Endothelial cell of umbilical vein (primary cell): ENCODE measurements at regions of chr11 and their contacts with region 1.

Region 1: DNA sequence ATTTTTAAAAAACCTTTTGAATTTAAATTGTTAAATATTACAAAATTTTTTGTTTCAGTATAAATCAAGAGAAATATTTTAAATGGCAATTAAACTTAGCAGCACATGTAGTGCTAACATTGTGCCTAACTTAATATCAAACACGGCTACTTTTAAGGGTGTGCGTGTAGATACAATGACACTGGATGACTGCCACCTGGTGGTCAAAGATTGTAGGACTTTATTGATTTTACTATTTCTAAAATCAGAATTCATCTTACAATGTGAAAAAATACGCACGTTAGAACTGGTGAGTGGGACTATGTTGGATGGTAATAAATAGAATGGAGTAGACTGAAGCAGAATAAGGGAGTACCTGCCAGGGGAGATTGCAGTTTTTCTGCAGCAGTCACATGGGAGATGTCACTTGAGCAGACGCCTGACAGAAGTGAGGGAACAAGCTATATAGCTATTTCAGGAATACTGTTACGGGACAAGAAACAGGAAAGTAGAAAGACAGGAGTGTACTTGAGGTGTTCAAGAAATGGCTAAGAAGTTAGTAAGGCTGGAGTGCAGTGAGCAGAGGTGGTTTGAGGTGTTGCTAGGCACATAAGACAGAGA is 52.9 kb downstream of the UVRAG start:
- DNase-seq: peak; percentile 71
- H3K4me3 ChIP-seq: no peak overlapping the region
- H3K27ac ChIP-seq: no peak overlapping the region
- H3K4me1 ChIP-seq: peaks cover 20% of the 10 kb centered on the region
- H3K27me3 ChIP-seq: no peaks in the 10 kb centered on the region
- CTCF ChIP-seq: peak; percentile 47 to 58
- POLR2A ChIP-seq: no peak

Region 2: DNA sequence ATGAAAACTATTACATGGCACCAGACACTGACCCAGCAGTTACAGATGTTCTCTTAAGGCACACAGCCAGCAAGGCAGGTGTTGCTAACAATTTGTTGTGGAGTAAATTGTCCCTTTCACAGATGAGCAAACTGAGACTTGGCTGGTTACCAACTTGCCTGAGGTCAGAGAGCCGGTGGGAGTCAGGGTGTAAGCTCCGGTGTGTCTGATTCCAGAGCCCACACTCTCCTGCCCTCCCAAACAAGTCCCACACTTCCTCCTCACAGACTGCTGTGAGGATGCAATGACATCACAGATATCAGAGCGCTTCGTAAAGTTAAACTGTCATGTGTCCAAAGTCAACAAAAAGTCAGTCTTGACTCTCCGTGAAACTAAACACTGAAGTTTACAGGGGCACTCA is 354.6 kb before region 1 on chr11:
- CTCF ChIA-PET with region 1: no interaction called
- POLR2A ChIA-PET with region 1: no interaction called
- dilution Hi-C with region 1: no loop called
- intact Hi-C with region 1: no loop called
- DNase-seq: peak; percentile 53
- H3K4me3 ChIP-seq: no peak overlapping the region
- H3K27ac ChIP-seq: no peak overlapping the region
- H3K4me1 ChIP-seq: no peaks in the 10 kb centered on the region
- H3K27me3 ChIP-seq: no peaks in the 10 kb centered on the region
- CTCF ChIP-seq: no peak
- POLR2A ChIP-seq: no peak

Region 3: GRCh38 chr11:75689863-75690609 is 177.8 kb before region 1 on chr11:
- CTCF ChIA-PET with region 1: no interaction called
- POLR2A ChIA-PET with region 1: no interaction called
- dilution Hi-C with region 1: no loop called
- intact Hi-C with region 1: no loop called
- DNase-seq: no peak
- H3K4me3 ChIP-seq: no peak overlapping the region
- H3K27ac ChIP-seq: no peak overlapping the region
- H3K4me1 ChIP-seq: no peaks in the 10 kb centered on the region
- H3K27me3 ChIP-seq: peaks cover 12 to 16% of the 10 kb centered on the region in 2 experiments
- CTCF ChIP-seq: no peak
- POLR2A ChIP-seq: no peak

Region 4: DNA sequence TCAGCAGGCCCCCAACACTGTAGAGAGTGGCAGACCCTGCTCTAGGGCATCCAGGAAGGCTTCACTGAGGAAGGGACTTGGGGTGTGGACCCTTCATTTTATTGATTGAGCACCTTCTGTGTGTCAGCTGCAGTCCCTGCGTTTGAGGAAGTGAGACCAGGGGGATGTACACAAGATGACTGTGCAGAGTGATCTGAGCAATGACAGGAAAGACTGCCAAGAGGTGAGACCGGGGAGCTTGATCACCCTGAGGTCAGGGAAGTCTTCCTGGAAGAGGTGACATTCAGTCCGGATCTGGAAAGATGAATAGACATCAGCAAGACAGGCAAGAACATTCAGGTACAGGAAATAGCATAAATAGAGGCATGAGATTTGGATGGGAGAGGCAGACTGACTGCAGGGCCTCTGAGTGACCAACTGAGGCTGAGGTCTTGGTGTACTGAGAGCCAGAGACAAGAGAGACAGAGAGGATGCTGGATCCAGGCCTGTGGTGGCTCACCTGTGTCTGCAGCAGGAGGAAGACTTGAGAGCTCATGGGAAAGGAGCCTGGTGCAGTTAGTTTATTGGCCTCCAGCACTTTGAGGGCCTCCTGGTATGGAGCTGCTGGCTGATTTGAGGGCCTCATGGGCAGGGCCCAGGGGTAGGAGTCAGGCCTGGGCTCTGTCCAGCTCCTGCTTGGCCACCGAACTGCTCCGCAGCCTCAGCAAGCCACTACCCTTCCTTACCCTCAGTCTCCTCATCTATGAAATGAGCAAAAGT is 94.1 kb before region 1 on chr11:
- CTCF ChIA-PET with region 1: no interaction called
- POLR2A ChIA-PET with region 1: no interaction called
- dilution Hi-C with region 1: no loop called
- intact Hi-C with region 1: no loop called
- DNase-seq: no peak
- H3K4me3 ChIP-seq: no peak overlapping the region
- H3K27ac ChIP-seq: no peak overlapping the region
- H3K4me1 ChIP-seq: peaks cover 15% of the 10 kb centered on the region
- H3K27me3 ChIP-seq: peaks cover 19 to 23% of the 10 kb centered on the region in 2 experiments
- CTCF ChIP-seq: no peak
- POLR2A ChIP-seq: no peak

Region 5: DNA sequence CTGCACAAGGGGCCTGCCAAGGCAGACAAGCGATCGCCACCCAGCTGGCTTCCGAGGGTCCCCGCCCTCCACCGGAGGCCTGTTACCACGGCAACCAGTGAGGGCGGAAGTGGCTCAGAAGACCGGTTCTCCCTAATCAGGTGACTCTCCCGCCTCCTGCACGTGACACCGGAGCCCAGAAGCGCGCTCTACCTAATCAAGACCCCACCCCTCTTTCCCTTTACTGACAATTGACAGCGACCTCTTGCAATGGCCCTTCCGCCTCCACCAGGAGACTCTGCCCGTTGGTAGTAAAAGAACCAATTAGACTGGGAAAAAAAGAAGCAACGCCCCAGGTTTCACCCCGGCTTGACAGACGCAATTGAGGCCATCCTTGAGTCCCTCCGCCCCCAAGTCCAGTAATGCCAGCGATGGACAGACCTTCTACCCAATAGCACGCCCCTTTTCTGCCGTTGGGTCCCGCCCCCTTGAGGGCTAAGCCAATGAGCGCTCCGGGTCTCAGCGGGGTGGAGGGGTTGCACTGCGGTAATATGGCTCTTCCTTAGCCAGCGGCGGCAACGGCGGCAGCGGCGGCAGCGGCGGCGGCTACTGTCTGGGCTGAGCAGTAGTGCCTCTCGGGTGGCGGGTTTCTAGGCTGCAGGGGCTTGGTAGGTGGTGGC is 53.1 kb before region 1 on chr11 and contains the start of gene UVRAG:
- CTCF ChIA-PET with region 1: interaction called, 55 read pairs
- POLR2A ChIA-PET with region 1: no interaction called
- dilution Hi-C with region 1: no loop called
- intact Hi-C with region 1: loop called (anchors 2 kb)
- DNase-seq: peak; percentile 100
- H3K4me3 ChIP-seq: peak within 1 kb of the TSS; percentile 90 to 95 (median 93)
- H3K27ac ChIP-seq: peak within 1 kb of the TSS; percentile 88
- H3K4me1 ChIP-seq: peaks cover 35% of the 10 kb centered on the region
- H3K27me3 ChIP-seq: no peaks in the 10 kb centered on the region
- CTCF ChIP-seq: no peak
- POLR2A ChIP-seq: peak; percentile 82
- total RNA-seq, gene UVRAG: 65.6 and 67.3 TPM in 2 replicates

Region 6: GRCh38 chr11:75826461-75827230 is 41.2 kb before region 1 on chr11:
- CTCF ChIA-PET with region 1: interaction called, 18 read pairs
- POLR2A ChIA-PET with region 1: interaction called, 4 read pairs
- dilution Hi-C with region 1: no loop called
- intact Hi-C with region 1: loop called (anchors 1 kb)
- DNase-seq: peak; percentile 84
- H3K4me3 ChIP-seq: peak overlapping the region in 1 of 3 experiments; percentile 1
- H3K27ac ChIP-seq: peak overlapping the region; percentile 90
- H3K4me1 ChIP-seq: peaks cover 56% of the 10 kb centered on the region
- H3K27me3 ChIP-seq: no peaks in the 10 kb centered on the region
- CTCF ChIP-seq: no peak
- POLR2A ChIP-seq: no peak

Region 7: GRCh38 chr11:75831915-75832502 is 35.9 kb before region 1 on chr11:
- CTCF ChIA-PET with region 1: interaction called, 18 read pairs
- POLR2A ChIA-PET with region 1: interaction called, 4 read pairs
- dilution Hi-C with region 1: no loop called
- intact Hi-C with region 1: loop called (anchors 1 kb)
- DNase-seq: no peak
- H3K4me3 ChIP-seq: no peak overlapping the region
- H3K27ac ChIP-seq: no peak overlapping the region
- H3K4me1 ChIP-seq: peaks cover 23% of the 10 kb centered on the region
- H3K27me3 ChIP-seq: no peaks in the 10 kb centered on the region
- CTCF ChIP-seq: no peak
- POLR2A ChIP-seq: peak; percentile 29

Region 8: DNA sequence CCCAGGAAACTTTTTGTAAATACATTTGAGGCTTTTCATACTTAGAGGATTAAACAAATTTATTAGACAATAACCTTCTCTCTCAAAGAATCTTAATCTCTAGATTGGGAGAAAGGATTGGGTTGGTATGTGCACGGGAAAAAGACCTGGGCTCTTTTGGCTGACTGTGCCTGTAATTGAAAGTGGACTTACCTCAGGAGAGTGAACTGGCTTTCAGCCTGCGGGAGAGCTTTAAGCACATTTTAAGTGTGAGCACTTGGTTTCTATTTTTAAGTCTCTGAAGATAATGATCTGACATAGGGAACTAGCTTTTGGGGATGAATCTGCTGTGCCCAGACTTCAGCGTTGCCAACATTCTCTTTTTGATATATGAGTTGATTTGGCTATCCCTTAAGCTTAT is 17.1 kb before region 1 on chr11:
- CTCF ChIA-PET with region 1: interaction called, 21 read pairs
- POLR2A ChIA-PET with region 1: no interaction called
- dilution Hi-C with region 1: no loop called
- intact Hi-C with region 1: no loop called
- DNase-seq: peak; percentile 23
- H3K4me3 ChIP-seq: no peak overlapping the region
- H3K27ac ChIP-seq: peak overlapping the region; percentile 20
- H3K4me1 ChIP-seq: peaks cover 22% of the 10 kb centered on the region
- H3K27me3 ChIP-seq: no peaks in the 10 kb centered on the region
- CTCF ChIP-seq: no peak
- POLR2A ChIP-seq: no peak

Region 9: GRCh38 chr11:75878933-75879332 is 11.1 kb after region 1 on chr11:
- CTCF ChIA-PET with region 1: interaction called, 23 read pairs
- POLR2A ChIA-PET with region 1: no interaction called
- dilution Hi-C with region 1: no loop called
- intact Hi-C with region 1: no loop called
- DNase-seq: no peak
- H3K4me3 ChIP-seq: no peak overlapping the region
- H3K27ac ChIP-seq: no peak overlapping the region
- H3K4me1 ChIP-seq: no peaks in the 10 kb centered on the region
- H3K27me3 ChIP-seq: no peaks in the 10 kb centered on the region
- CTCF ChIP-seq: no peak
- POLR2A ChIP-seq: no peak